Posterior vena cava (tissue), 2 donors: ENCODE measurements at regions of chr5 and their contacts with region 1.

Region 1: DNA sequence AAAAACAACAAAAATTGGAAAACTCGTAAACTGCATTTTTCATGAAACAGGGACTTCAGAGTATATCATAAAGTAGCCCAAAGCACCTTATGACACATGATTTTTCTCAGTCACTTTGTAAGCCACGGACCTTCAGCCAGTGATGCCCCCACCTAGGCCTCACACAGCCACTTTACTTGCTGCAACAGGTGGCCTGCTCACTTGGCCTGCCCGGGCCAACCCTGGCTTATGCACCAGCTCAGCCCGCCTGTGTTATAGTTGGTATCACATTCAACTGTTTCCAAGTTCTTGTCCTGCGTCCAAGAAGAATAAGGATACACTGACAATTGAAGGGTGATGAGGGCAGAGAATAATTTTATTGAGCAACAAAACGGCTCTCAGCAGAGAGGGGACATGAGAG is 219.2 kb downstream of the FER start:
- DNase-seq: peak; percentile 73

Region 2: DNA sequence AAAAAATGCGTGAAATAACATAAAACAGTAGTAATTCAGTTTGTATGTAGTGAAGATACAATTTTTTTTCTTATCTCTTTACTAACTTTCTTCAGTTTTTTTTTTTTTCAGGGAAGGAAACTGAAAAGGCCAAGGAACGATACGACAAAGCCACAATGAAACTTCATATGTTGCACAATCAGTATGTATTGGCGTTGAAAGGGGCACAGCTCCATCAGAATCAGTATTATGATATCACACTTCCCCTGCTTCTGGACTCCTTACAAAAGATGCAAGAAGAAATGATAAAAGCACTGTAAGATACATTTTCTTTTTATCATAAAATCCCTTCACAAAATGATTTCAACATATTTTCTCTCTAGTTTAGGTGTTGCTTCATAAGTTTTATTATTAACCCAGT is 99.3 kb before region 1 on chr5:
- intact Hi-C with region 1: no loop called
- DNase-seq: no peak

Region 3: DNA sequence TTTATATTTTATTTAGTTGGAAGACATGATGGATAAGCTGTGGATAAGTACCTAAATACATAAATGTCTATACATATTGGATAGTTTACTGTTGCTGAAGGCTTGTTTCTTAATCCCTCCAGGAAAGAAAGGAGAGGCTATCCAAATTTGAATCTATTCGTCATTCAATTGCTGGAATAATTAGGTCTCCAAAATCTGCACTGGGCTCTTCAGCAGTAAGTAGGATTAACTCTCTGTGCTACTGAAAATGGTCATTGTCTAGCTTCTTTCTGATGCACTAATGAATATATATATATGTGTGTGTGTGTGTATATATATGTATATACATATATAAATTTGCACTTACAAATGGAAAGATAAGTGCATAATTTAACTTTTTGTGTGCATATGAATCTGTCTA is 20.9 kb before region 1 on chr5:
- intact Hi-C with region 1: loop called in 1 of 2 experiments (anchors 1 kb)
- DNase-seq: no peak